ENCODE measurements at regions of chr17 and their contacts with region 1.

Region 1: GRCh38 chr17:8118769-8119580 is 661 bp upstream of the ALOXE3 start:
- DNase-seq: peak; percentile 90
- ATAC-seq: peak; percentile 68
- H3K4me3 Mint-ChIP-seq: peak overlapping the region; percentile 91
- H3K27ac Mint-ChIP-seq: peak overlapping the region; percentile 92
- H3K4me1 Mint-ChIP-seq: peaks cover 46% of the 10 kb centered on the region
- H3K27me3 Mint-ChIP-seq: peaks cover 61% of the 10 kb centered on the region

Region 2: DNA sequence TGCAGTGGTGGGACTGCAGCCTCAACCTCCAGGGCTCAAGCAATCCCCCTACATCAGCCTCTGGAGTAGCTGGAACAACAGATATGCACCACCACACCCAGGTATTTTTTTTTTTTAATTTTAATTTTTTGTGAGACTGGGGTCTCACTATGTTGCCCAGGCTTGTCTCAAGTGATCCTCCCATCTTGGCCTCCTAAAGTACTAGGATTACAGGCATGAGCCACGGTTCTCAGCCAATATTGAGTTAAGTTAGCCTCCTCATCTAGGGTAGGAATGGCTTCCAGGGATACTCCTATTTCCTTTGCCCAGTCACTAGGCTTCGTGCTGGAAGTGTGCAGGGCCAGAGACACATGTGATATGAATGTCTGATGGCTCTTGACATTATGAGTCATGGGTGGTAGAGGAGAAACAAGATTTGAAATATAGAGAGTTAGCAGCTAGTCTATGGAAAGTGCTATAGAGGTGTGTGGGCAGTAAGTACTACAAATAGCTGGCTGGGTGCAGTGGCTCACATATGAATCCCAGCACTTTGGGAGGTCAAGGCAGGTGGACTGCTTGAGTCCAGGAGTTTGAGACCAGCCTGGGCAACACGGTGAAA is 13.0 kb after region 1 on chr17:
- POLR2A ChIA-PET with region 1: no interaction called
- DNase-seq: no peak
- ATAC-seq: no peak
- H3K4me3 Mint-ChIP-seq: no peak overlapping the region
- H3K27ac Mint-ChIP-seq: no peak overlapping the region
- H3K4me1 Mint-ChIP-seq: peaks cover 8% of the 10 kb centered on the region
- H3K27me3 Mint-ChIP-seq: peaks cover 18% of the 10 kb centered on the region

Region 3: GRCh38 chr17:8294814-8295316 is 175.9 kb after region 1 on chr17:
- POLR2A ChIA-PET with region 1: interaction called, 11 read pairs
- DNase-seq: no peak
- ATAC-seq: no peak
- H3K4me3 Mint-ChIP-seq: peak overlapping the region; percentile 96
- H3K27ac Mint-ChIP-seq: peak overlapping the region; percentile 92
- H3K4me1 Mint-ChIP-seq: peaks cover 32% of the 10 kb centered on the region
- H3K27me3 Mint-ChIP-seq: no peaks in the 10 kb centered on the region

Measured in activated naive CD8-positive, alpha-beta T cell treated with anti-CD3 and anti-CD28 coated beads, Interleukin-2, amount 10 ng/mL, durations not matched to agents 7 days and 5 days (primary cell).